ENCODE measurements at regions of chr9 and their contacts with region 1.

Region 1: DNA sequence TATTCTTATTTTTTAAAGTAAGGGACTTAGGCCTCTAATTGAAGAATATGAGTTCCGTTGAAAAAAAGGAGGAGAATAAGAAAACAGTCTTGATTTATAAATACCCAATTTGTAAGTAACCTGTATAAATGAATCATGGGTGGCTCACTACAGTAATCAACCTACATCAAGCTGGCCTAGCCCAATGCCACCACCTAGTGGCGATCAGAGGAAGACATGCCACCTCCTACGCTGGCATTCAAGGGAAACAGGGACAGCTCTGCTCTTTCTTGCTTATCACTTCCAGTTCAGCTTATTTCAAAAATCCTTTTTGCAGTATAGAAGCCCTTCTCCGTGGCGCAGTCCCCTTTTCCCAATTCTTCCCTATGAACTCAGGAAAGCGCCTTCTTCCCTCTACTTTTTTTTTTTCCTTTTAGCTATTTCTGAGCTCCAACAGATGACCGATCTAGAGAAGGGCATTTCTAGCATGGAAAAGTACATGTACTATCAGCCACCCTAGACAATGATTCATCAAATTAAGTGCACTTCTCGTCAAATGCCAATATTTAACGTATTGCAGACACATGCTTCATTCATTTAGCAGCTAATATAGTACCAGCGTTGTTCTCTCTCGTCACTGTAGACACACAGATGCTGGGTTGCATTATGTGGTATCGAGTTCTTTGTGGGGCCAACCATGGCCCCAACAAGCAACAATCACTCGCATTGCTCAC is 28.3 kb downstream of the PTPN3 start:
- DNase-seq: peak; percentile 63
- ATAC-seq: peak; percentile 99
- H3K4me3 ChIP-seq: no peak overlapping the region
- H3K27ac ChIP-seq: no peak overlapping the region
- H3K4me1 ChIP-seq: peaks cover 19% of the 10 kb centered on the region
- H3K27me3 ChIP-seq: no peaks in the 10 kb centered on the region
- CTCF ChIP-seq: peak; percentile 86
- EP300 ChIP-seq: no peak
- POLR2A ChIP-seq: no peak
- RAD21 ChIP-seq: peak; percentile 60

Region 2: DNA sequence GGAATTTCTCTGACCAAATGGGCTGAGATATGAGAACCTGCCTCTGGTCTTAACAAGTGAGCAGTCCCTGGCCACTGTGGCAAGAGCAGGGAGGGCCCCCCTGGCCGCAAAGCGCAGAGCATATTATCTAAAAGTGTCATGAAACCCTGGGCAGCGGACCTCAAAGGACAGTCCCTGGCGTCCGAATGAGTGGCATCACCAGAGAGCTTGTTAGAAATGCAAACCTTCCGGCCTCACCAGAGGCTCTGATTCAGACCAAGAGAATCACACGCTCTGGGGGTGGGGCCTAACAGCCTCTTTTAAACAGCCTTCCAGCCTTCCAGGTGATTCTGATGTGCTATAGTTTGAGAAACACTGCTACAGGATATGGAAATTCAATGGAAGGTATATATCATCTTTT is 17.4 kb after region 1 on chr9:
- CTCF ChIA-PET with region 1: no interaction called
- POLR2A ChIA-PET with region 1: no interaction called
- in situ Hi-C with region 1: no loop called
- intact Hi-C with region 1: no loop called
- DNase-seq: no peak
- ATAC-seq: no peak
- H3K4me3 ChIP-seq: no peak overlapping the region
- H3K27ac ChIP-seq: no peak overlapping the region
- H3K4me1 ChIP-seq: peaks cover 16% of the 10 kb centered on the region; the same call in 1 of the 2 replicates
- H3K27me3 ChIP-seq: no peaks in the 10 kb centered on the region
- CTCF ChIP-seq: no peak
- EP300 ChIP-seq: no peak
- POLR2A ChIP-seq: no peak
- RAD21 ChIP-seq: no peak

Region 3: GRCh38 chr9:109507421-109507838 is 37.6 kb after region 1 on chr9:
- CTCF ChIA-PET with region 1: no interaction called
- POLR2A ChIA-PET with region 1: no interaction called
- in situ Hi-C with region 1: no loop called
- intact Hi-C with region 1: loop called (anchors 5 kb)
- DNase-seq: peak; percentile 92
- ATAC-seq: peak; percentile 89
- H3K4me3 ChIP-seq: peak overlapping the region; percentile 29 to 51 (median 32)
- H3K27ac ChIP-seq: no peak overlapping the region
- H3K4me1 ChIP-seq: peaks cover 51% of the 10 kb centered on the region
- H3K27me3 ChIP-seq: no peaks in the 10 kb centered on the region; a peak in 2 of 5 replicates
- CTCF ChIP-seq: peak; percentile 21; the same call in 1 of the 2 replicates
- EP300 ChIP-seq: peak; percentile 70 to 88; a peak in 3 of 4 replicates
- POLR2A ChIP-seq: no peak
- RAD21 ChIP-seq: no peak

Measured in HepG2 (cell line).